Right ventricle myocardium superior (tissue), 1 donor: ENCODE measurements at regions of chr11 and their contacts with region 1.

Region 1: DNA sequence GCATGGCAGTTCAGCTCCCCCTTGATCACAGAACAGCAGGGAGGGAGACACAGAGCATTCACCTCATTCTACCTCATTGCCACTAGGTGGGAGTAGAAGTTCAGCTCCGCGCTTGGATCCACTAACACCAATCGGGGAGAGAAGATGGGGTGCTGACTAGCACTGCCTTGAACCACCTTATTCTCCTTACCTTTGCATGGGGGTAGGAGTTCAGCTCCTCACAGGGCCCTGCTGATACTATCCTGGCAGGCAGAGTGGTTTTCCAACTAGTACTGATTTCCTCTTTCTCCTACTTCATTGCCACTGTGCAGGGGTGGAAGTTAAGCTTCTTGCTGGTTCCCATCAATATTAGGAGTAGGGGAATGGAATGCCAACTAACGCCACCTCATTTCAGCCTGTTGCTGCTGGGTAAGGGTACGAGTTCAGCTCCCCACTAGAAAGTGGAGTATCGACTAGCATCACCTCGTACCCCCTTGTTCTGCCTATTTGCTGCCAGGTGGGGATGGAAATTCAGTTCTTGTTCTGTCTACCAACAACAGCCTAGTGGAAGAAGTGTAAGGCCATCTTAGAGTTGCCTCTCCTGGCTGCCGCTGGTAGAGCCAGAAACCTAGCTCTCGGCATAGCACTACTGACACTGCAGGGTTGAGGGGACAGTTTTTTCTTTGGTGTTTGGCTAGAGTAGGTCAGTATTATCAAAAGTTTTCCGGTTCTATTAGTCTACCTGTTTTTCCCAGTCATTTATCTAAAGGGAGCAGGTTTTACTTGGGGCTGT is 550.9 kb upstream of the CCDC90B start:
- DNase-seq: no peak
- ATAC-seq: peak; percentile 90

Region 2: DNA sequence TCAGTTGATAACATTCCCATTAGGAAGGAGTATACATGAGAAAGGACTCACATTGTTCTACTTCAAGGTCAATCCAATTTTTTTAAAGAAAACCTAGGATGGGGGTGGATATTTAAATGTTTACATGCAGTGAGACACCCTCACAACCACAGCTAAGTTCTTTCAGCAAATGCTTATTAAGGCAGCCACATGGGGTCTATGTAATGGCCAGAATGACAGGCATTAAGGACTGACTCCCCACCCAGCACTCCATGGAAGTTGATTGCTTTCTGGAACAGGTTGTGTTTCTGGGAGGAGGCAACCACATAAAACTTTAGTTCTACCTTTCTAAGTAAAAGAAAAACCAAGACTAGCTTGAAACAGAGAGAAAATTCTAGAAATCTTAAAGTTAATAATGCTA is 111.1 kb after region 1 on chr11:
- intact Hi-C with region 1: no loop called
- DNase-seq: no peak
- ATAC-seq: no peak

Region 3: DNA sequence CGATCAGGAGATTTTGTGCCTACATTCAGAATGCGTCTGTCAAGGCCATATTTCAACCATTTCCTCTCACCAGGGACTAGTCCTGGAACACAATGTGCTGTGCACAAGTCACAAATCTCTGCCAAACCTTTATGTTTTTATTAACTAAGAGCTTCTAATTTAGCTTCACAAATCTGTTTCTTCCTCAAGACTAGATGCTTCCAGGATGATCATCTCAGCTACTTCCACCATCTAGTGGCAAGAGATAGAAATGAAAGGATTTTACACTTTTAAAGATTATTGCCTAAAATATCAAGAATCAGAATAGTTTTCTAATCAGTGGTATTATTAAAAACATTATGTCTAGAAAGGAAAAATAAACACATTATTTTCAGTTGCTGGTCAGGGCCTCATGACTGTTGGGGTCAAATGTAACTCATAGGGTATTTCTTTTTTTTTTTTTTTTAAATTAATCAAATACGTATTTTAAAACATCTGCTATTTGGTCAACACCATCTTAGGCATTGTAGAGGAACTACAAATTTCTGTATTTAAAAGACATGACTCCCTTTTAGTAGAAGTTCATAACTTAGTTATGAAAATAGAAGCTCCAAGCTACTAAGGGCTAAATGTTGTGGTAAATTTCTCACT is 687.5 kb after region 1 on chr11:
- intact Hi-C with region 1: loop called (anchors 10 kb)
- DNase-seq: no peak
- ATAC-seq: no peak